H1 (cell line): ENCODE measurements at regions of chr2 and their contacts with region 1.

Region 1: GRCh38 chr2:45839508-45840251 is 188.2 kb downstream of the PRKCE start:
- DNase-seq: no peak
- H3K4me3 ChIP-seq: no peak overlapping the region
- H3K27ac ChIP-seq: no peak overlapping the region
- H3K4me1 ChIP-seq: peaks cover 3 to 7% (median 4%) of the 10 kb centered on the region in 4 experiments; a peak in 5 of 7 replicates
- H3K27me3 ChIP-seq: no peaks in the 10 kb centered on the region
- CTCF ChIP-seq: no peak
- EP300 ChIP-seq: no peak
- POLR2A ChIP-seq: no peak
- RAD21 ChIP-seq: no peak

Region 2: DNA sequence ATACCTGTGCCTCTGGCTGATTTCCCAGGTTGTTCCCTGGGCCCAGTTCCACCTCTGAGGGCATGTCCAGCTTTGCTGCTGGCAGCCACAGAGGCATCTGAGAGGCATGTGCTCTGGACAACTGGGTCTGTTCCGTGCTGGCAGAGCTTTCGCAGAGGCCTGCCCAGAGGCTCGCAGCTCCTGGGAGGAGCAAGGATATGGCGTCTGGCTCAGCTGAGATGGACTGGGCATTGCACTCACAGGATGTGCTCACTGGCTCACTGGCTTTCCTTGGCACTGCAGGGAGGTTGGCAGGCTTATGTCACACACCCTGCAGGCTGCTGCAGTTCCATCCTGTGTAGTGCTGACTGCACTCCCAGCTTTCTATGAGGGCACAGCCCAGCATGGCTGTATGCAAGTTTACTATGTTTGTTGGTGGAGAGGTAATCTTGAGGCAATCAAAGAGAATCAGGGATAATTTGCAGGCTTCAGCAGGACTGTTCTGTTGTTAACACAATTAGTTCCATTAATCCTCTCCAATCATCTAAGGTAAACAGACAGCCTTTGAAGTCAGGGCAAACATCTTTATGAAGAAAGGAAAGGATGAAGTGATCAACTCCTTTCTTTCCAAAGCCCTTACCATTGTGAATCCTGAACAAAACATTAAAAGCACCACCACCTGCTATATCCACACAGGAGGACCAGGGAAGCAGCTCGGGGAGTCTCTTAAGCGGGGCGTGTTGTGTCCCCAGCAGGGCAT is 15.8 kb before region 1 on chr2:
- CTCF ChIA-PET with region 1: interaction called, 10 read pairs
- POLR2A ChIA-PET with region 1: no interaction called
- DNase-seq: no peak
- H3K4me3 ChIP-seq: no peak overlapping the region
- H3K27ac ChIP-seq: no peak overlapping the region
- H3K4me1 ChIP-seq: peaks cover 0 to 2% (median 0%) of the 10 kb centered on the region in 4 experiments; a peak in 1 of 7 replicates
- H3K27me3 ChIP-seq: no peaks in the 10 kb centered on the region
- CTCF ChIP-seq: no peak
- EP300 ChIP-seq: no peak
- POLR2A ChIP-seq: no peak
- RAD21 ChIP-seq: no peak